PC-9 (cell line): ENCODE measurements at regions of chr11 and their contacts with region 1.

Region 1: GRCh38 chr11:76365038-76365679 is 15.8 kb downstream of the THAP12 start:
- DNase-seq: no peak
- H3K4me3 ChIP-seq: no peak overlapping the region
- H3K27ac ChIP-seq: no peak overlapping the region
- H3K4me1 ChIP-seq: no peaks in the 10 kb centered on the region
- H3K27me3 ChIP-seq: no peaks in the 10 kb centered on the region
- CTCF ChIP-seq: no peak

Region 2: GRCh38 chr11:75789521-75789920 is 575.6 kb before region 1 on chr11:
- CTCF ChIA-PET with region 1: no interaction called
- POLR2A ChIA-PET with region 1: interaction called, 11 read pairs
- intact Hi-C with region 1: no loop called
- DNase-seq: no peak
- H3K4me3 ChIP-seq: no peak overlapping the region
- H3K27ac ChIP-seq: no peak overlapping the region
- H3K4me1 ChIP-seq: peaks cover 31% of the 10 kb centered on the region
- H3K27me3 ChIP-seq: no peaks in the 10 kb centered on the region
- CTCF ChIP-seq: no peak

Region 3: DNA sequence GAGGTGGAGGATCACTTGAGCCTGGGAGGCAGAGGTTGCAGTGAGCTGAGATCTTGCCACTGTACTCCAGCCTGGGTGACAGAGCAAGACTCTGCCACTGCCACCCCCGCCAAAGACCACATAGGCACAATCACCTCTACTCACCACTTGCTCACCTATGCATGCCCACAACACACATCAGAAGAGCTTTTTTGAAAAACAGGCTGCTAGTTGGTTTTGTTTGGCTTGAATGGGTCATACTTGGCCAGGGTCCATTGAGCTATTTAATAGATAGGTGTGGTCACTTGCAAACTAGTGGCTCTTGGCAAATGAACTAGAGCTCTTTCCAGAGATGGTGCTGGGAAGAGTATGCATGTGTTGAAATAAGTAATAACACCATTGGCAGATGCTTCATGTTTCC is 159.8 kb after region 1 on chr11:
- CTCF ChIA-PET with region 1: no interaction called
- POLR2A ChIA-PET with region 1: no interaction called
- intact Hi-C with region 1: no loop called
- DNase-seq: peak; percentile 7 to 50
- H3K4me3 ChIP-seq: no peak overlapping the region
- H3K27ac ChIP-seq: no peak overlapping the region
- H3K4me1 ChIP-seq: no peaks in the 10 kb centered on the region; the same call in 1 of the 2 replicates
- H3K27me3 ChIP-seq: no peaks in the 10 kb centered on the region
- CTCF ChIP-seq: no peak